Endothelial cell of umbilical vein (primary cell): ENCODE measurements at regions of chr7 and their contacts with region 1.

Region 1: GRCh38 chr7:8190119-8190895 is 71.7 kb downstream of the ICA1 start:
- DNase-seq: peak; percentile 65
- H3K4me3 ChIP-seq: no peak overlapping the region
- H3K27ac ChIP-seq: no peak overlapping the region
- H3K4me1 ChIP-seq: no peaks in the 10 kb centered on the region
- H3K27me3 ChIP-seq: no peaks in the 10 kb centered on the region
- CTCF ChIP-seq: peak; percentile 34 to 57
- POLR2A ChIP-seq: no peak

Region 2: GRCh38 chr7:6317797-6318438 is 1872.4 kb before region 1 on chr7:
- CTCF ChIA-PET with region 1: no interaction called
- POLR2A ChIA-PET with region 1: no interaction called
- dilution Hi-C with region 1: no loop called
- intact Hi-C with region 1: no loop called
- DNase-seq: peak; percentile 47
- H3K4me3 ChIP-seq: no peak overlapping the region
- H3K27ac ChIP-seq: peak overlapping the region; percentile 15
- H3K4me1 ChIP-seq: peaks cover 9% of the 10 kb centered on the region
- H3K27me3 ChIP-seq: no peaks in the 10 kb centered on the region
- CTCF ChIP-seq: no peak
- POLR2A ChIP-seq: no peak

Region 3: DNA sequence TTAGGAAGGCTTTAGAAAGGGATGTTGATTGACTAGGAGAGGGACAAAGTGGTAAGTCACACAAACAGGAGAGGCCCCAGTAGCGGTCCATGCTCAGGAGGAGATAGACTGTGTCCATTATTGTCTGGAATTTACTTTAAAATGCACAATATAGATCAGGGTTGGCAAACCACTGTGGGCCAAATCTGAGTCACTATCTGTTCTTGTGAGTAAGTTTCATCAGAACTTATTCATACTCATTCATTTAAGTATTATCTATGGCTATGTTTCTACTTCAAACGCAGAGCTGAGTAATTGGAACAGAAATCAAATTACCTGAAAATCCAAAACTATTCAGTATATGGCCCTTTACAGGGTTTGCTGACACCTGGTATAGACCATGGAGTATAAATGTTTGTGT is 821.2 kb before region 1 on chr7:
- CTCF ChIA-PET with region 1: no interaction called
- POLR2A ChIA-PET with region 1: no interaction called
- dilution Hi-C with region 1: no loop called
- intact Hi-C with region 1: no loop called
- DNase-seq: no peak
- H3K4me3 ChIP-seq: no peak overlapping the region
- H3K27ac ChIP-seq: no peak overlapping the region
- H3K4me1 ChIP-seq: no peaks in the 10 kb centered on the region
- H3K27me3 ChIP-seq: no peaks in the 10 kb centered on the region
- CTCF ChIP-seq: no peak
- POLR2A ChIP-seq: no peak

Region 4: DNA sequence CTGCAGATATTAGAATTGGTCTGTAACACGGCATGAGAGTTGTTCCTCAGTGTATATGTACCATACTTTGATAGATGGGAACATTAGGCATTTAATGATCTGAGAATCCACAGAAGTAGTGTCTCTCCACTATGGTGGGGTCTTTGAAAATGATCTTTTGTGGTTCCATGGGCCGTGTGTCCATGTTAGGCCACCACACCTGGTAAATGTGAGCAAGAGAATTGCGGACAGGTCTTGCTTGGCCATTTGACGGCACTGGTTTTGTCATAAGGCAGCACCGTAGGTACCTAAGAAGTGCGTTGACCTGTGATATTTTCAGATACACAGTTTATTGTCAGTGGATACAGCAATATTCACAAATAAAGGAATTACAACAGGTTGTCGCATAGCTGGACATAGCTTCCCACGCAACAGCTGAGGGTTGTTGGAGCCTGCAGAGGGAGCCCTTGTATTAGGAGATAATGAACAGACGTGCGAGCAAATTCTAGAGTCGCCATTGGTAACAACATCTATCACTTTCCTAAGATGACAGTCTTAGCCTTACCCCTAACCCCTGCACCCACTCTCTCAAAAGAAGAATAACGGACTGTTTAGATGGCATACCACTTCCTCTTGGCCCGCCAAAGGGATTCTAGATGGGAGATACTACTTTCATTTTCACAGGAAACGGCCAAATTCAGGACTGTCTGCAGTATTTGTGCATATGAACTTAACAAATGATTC is 766.0 kb before region 1 on chr7:
- CTCF ChIA-PET with region 1: interaction called, 10 read pairs
- POLR2A ChIA-PET with region 1: no interaction called
- dilution Hi-C with region 1: no loop called
- intact Hi-C with region 1: no loop called
- DNase-seq: peak; percentile 67
- H3K4me3 ChIP-seq: peak overlapping the region; percentile 37 to 93 (median 81)
- H3K27ac ChIP-seq: peak overlapping the region; percentile 3
- H3K4me1 ChIP-seq: peaks cover 2% of the 10 kb centered on the region
- H3K27me3 ChIP-seq: peaks cover 0 to 2% of the 10 kb centered on the region in 2 experiments
- CTCF ChIP-seq: peak; percentile 73 to 82
- POLR2A ChIP-seq: no peak

Region 5: GRCh38 chr7:7640221-7641128 is 549.8 kb before region 1 on chr7 and contains the start of gene UMAD1:
- CTCF ChIA-PET with region 1: interaction called, 21 read pairs
- POLR2A ChIA-PET with region 1: no interaction called
- dilution Hi-C with region 1: no loop called
- intact Hi-C with region 1: no loop called
- DNase-seq: peak; percentile 98
- H3K4me3 ChIP-seq: peak within 1 kb of the TSS; percentile 66 to 93 (median 79)
- H3K27ac ChIP-seq: peak within 1 kb of the TSS; percentile 21
- H3K4me1 ChIP-seq: peaks cover 8% of the 10 kb centered on the region
- H3K27me3 ChIP-seq: no peaks in the 10 kb centered on the region
- CTCF ChIP-seq: no peak
- POLR2A ChIP-seq: peak; percentile 78
- total RNA-seq, gene UMAD1: 6.1 and 6.6 TPM in 2 replicates

Region 6: DNA sequence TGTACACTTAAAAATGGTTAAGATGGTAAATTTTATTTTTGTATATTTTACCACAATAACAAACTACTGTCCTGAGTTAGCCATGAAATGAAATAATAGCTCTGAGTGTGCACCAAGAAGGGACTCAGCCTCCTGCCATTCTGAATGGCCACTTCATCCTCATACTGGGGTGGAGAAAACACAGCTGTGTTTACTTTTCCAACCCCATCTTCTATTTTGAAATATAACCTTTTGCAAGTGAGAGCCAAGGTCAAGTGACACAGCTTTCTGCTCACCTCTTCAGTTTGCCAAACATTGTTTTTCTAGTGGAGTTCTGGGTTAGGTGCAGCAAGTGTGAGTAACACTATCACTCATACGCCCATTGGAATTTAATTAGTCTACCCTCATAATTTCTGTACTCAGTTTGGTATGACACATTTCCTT is 329.1 kb before region 1 on chr7:
- CTCF ChIA-PET with region 1: interaction called, 4 read pairs
- POLR2A ChIA-PET with region 1: no interaction called
- dilution Hi-C with region 1: no loop called
- intact Hi-C with region 1: loop called (anchors 10 kb)
- DNase-seq: peak; percentile 96
- H3K4me3 ChIP-seq: no peak overlapping the region
- H3K27ac ChIP-seq: no peak overlapping the region
- H3K4me1 ChIP-seq: peaks cover 21% of the 10 kb centered on the region
- H3K27me3 ChIP-seq: no peaks in the 10 kb centered on the region
- CTCF ChIP-seq: no peak
- POLR2A ChIP-seq: peak; percentile 50

Region 7: DNA sequence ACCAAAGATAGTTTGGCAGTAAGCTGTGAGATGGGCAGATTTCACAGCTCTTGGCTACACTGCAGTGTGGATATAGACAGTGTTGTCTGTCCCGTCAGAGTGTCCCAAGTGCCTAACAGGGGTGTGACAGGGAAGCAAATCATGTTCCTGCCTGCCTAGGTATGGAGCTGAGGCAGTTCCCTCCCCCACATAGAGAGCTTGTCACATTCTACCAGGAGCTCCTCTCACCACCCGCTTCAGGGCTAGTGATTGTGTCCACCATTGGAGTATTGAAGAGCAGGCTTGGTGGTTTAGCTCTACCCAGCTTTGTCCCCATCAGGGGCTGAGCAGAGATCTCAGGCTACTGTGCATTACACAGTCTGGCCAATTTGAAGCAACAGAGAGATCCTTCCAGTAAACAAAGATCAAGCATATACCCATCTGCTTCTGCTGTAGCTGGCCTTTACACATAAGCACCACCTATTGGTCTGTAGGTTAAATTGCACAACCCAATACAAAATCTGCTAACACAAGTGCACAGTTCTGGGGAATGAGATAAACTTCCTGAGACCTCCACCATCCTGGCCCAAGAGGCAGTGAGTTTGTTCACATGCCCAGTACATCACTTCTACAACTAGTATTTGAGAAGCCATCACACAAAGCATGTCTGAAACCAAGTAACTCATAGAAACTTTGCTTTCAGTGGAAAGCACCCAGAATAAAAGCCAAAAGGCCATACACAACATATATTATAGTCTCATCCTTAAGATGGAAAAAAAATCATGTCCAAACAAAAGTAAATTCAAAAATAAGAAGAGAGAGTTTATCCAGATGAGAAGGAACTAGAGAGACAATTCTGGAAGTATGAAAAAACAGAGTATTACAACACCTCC is 154.4 kb before region 1 on chr7:
- CTCF ChIA-PET with region 1: interaction called, 10 read pairs
- POLR2A ChIA-PET with region 1: no interaction called
- dilution Hi-C with region 1: no loop called
- intact Hi-C with region 1: loop called (anchors 5 kb)
- DNase-seq: peak; percentile 46
- H3K4me3 ChIP-seq: no peak overlapping the region
- H3K27ac ChIP-seq: no peak overlapping the region
- H3K4me1 ChIP-seq: no peaks in the 10 kb centered on the region
- H3K27me3 ChIP-seq: no peaks in the 10 kb centered on the region
- CTCF ChIP-seq: peak; percentile 33 to 46
- POLR2A ChIP-seq: no peak

Region 8: DNA sequence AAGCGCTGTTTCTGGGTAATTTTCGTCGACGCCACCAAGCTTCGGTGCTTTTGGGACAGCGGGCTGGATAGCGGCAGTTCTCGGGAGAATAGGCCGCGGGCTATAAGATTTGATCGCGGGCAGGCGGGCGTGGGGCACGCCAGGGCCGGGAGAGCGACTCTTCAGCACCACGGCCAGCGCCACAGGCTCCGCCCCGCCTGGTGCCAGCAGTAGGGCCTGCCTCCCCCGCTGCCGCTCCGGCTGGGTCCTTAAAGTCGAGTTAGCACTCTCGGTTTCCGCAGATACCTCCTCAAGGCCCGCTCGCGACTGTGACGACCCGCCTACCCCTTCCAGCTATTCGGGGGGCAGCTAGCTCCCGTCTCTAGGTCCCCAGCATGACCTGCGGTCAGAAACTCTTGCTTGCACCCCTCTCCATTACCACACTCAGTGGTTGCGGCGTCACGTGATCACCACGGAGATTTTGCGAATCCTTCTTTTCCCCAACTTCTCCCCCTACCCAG is 252.6 kb after region 1 on chr7:
- CTCF ChIA-PET with region 1: no interaction called
- POLR2A ChIA-PET with region 1: no interaction called
- dilution Hi-C with region 1: no loop called
- intact Hi-C with region 1: no loop called
- DNase-seq: peak; percentile 32
- H3K4me3 ChIP-seq: no peak overlapping the region
- H3K27ac ChIP-seq: no peak overlapping the region
- H3K4me1 ChIP-seq: no peaks in the 10 kb centered on the region
- H3K27me3 ChIP-seq: peaks cover 24 to 34% of the 10 kb centered on the region in 2 experiments
- CTCF ChIP-seq: no peak
- POLR2A ChIP-seq: no peak